Activated T-helper 2 cell treated with anti-CD3 and anti-CD28 coated beads, Interferon-gamma antibody, Interleukin-2, Interleukin-4, amounts not matched to agents 10 μg/mL and 5 μg/mL and 100 μg/mL, durations not matched to agents 14 hours and 24 hours and 36 hours (primary cell): ENCODE measurements at regions of chr5 and their contacts with region 1.

Region 1: GRCh38 chr5:18314192-18314778 is 680.0 kb downstream of the TAF11L14 start:
- DNase-seq: no peak
- H3K4me3 Mint-ChIP-seq: no peak overlapping the region
- H3K27ac Mint-ChIP-seq: no peak overlapping the region
- H3K4me1 Mint-ChIP-seq: no peaks in the 10 kb centered on the region
- H3K27me3 Mint-ChIP-seq: no peaks in the 10 kb centered on the region

Region 2: GRCh38 chr5:17216176-17216973 is 1097.9 kb before region 1 on chr5:
- intact Hi-C with region 1: loop called (anchors 1 kb)
- DNase-seq: peak; percentile 28
- H3K4me3 Mint-ChIP-seq: peak overlapping the region; percentile 53
- H3K27ac Mint-ChIP-seq: no peak overlapping the region
- H3K4me1 Mint-ChIP-seq: peaks cover 6% of the 10 kb centered on the region
- H3K27me3 Mint-ChIP-seq: peaks cover 44% of the 10 kb centered on the region